MCF 10A (cell line): ENCODE measurements at regions of chr2 and their contacts with region 1.

Region 1: GRCh38 chr2:60756191-60757041 is at the start of gene PAPOLG:
- DNase-seq: peak; percentile 95
- H3K4me3 Mint-ChIP-seq: peak within 1 kb of the TSS; percentile 100
- H3K27ac Mint-ChIP-seq: peak within 1 kb of the TSS; percentile 99
- H3K4me1 Mint-ChIP-seq: peaks cover 10% of the 10 kb centered on the region
- H3K27me3 Mint-ChIP-seq: no peaks in the 10 kb centered on the region
- CTCF ChIP-seq: no peak
- total RNA-seq, gene PAPOLG: 16.9 and 18.4 TPM in 2 replicates

Region 2: DNA sequence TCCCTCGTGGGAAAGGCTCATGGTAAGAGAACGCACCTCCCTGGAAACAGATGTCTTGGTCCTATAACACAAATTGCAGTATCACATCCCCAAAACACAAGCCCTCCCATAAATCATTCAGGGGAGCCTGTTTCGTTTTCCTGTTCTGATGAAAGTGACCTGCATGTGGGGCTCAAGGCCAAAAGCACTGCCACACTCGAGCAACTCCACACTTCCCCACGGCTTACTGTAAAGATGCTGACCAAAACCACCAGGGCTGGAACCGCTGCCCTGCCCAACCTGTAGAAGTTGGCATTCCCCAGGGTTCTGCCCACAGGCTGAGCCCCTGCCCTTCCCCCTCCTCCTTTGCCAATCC is 342.6 kb before region 1 on chr2:
- CTCF ChIA-PET with region 1: no interaction called
- POLR2A ChIA-PET with region 1: no interaction called
- intact Hi-C with region 1: no loop called
- DNase-seq: no peak
- H3K4me3 Mint-ChIP-seq: no peak overlapping the region
- H3K27ac Mint-ChIP-seq: no peak overlapping the region
- H3K4me1 Mint-ChIP-seq: peaks cover 13% of the 10 kb centered on the region
- H3K27me3 Mint-ChIP-seq: peaks cover 8% of the 10 kb centered on the region
- CTCF ChIP-seq: no peak

Region 3: DNA sequence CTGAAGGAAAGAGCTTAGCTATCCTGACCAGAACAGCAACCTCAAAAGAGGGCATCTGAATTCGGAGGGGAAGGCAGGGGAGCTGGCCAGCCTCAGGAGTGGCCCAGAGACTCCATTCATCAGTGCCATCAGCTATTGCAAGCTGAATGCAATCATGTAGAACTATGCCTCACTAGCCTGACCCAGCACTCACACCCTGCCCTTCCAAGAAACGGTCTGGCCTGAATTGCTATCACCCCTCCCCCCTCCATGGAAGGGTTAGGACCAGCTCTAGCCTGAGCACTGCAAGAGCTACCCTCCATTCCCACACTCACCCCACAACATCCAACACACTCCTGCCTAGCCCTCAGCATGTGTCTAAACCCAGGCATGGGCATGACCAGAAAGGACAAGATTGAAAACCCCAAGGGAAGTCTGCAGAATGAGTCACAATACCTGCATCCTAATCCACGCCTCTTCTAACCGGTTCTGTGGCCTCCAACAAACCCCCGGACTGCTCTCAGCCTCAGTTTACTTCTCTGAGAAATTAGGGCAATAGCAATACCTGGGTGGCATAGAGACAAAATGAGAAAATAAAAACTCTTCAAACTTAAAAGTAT is 323.3 kb before region 1 on chr2:
- CTCF ChIA-PET with region 1: no interaction called
- POLR2A ChIA-PET with region 1: no interaction called
- intact Hi-C with region 1: no loop called
- DNase-seq: no peak
- H3K4me3 Mint-ChIP-seq: no peak overlapping the region
- H3K27ac Mint-ChIP-seq: no peak overlapping the region
- H3K4me1 Mint-ChIP-seq: no peaks in the 10 kb centered on the region
- H3K27me3 Mint-ChIP-seq: no peaks in the 10 kb centered on the region
- CTCF ChIP-seq: no peak

Region 4: GRCh38 chr2:60652832-60653340 is 103.5 kb before region 1 on chr2:
- CTCF ChIA-PET with region 1: no interaction called
- POLR2A ChIA-PET with region 1: no interaction called
- intact Hi-C with region 1: no loop called
- DNase-seq: no peak
- H3K4me3 Mint-ChIP-seq: no peak overlapping the region
- H3K27ac Mint-ChIP-seq: no peak overlapping the region
- H3K4me1 Mint-ChIP-seq: no peaks in the 10 kb centered on the region
- H3K27me3 Mint-ChIP-seq: peaks cover 26% of the 10 kb centered on the region
- CTCF ChIP-seq: no peak

Region 5: DNA sequence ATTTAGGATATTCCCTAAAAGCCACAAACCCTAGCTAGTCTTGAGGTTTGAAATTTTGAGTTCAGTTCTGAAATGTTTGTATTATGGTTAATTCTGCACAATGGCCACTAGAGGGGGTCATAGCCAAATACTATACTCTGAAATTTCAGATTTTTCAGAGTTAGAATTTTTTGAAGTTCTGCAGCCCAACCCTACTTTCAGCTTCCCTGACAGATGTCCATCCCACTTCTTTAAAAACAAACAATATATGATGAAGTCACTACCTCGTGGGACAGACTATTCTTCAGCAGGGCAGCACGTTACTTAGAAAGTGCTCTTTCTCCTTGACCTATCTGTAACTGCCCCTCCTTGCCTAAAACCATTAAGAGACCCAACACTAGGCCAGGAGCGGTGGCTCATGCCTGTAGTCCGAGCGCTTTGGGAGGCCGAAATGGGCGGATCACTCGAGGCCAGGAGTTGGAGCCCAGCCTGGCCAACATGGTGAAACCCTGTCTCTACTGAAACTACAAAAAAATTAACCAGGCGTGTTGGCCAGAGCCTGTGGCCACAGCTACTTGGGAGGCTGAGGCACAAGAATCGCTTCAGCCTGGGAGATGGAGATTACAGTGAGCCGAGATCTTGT is 48.6 kb before region 1 on chr2:
- CTCF ChIA-PET with region 1: interaction called, 68 read pairs
- POLR2A ChIA-PET with region 1: interaction called, 36 read pairs
- intact Hi-C with region 1: loop called (anchors 1 kb)
- DNase-seq: peak; percentile 65
- H3K4me3 Mint-ChIP-seq: no peak overlapping the region
- H3K27ac Mint-ChIP-seq: no peak overlapping the region
- H3K4me1 Mint-ChIP-seq: peaks cover 11% of the 10 kb centered on the region
- H3K27me3 Mint-ChIP-seq: no peaks in the 10 kb centered on the region
- CTCF ChIP-seq: peak; percentile 63

Region 6: DNA sequence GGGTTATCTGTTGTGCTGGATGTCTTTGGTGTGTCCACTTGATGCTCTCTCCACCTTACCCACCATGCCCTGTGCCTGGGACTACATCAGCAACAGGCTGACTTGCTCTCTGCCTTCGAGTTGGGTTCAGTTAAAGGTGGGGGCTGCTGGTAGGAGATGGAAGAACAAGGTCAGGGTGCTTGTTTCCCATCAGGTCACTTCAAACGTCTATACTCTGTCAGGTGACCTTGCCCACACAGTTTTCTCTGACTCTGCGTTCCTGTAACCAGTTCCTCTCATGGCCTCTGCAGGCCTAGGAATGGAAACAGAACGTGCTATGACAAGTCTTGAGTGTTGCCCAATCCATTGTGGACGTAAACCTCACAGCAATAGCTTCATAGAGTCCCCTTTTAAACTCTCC is 38.7 kb before region 1 on chr2:
- CTCF ChIA-PET with region 1: interaction called, 5 read pairs
- POLR2A ChIA-PET with region 1: interaction called, 10 read pairs
- intact Hi-C with region 1: no loop called
- DNase-seq: peak; percentile 90
- H3K4me3 Mint-ChIP-seq: no peak overlapping the region
- H3K27ac Mint-ChIP-seq: peak overlapping the region; percentile 89
- H3K4me1 Mint-ChIP-seq: peaks cover 15% of the 10 kb centered on the region
- H3K27me3 Mint-ChIP-seq: no peaks in the 10 kb centered on the region
- CTCF ChIP-seq: no peak

Region 7: DNA sequence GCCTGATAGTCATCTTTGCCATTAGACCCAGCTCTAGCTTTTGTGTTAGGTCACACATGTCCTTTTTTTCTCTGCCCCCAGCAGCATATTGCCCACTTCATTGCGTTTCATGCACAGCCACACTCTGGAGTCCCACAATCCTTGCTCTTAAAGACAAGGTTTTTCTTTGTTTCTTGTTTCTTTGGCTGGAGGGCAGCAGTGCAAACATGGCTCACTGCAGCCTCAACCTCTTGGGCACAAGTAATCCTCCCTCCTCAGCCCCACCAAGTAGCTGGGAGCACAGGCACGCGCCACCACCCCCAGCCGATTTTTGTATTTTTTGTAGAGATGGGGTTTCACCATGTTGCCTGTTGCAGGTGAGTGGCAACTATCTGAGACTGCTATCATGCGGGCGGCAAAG is 17.3 kb before region 1 on chr2:
- CTCF ChIA-PET with region 1: no interaction called
- POLR2A ChIA-PET with region 1: interaction called, 10 read pairs
- intact Hi-C with region 1: no loop called
- DNase-seq: no peak
- H3K4me3 Mint-ChIP-seq: no peak overlapping the region
- H3K27ac Mint-ChIP-seq: no peak overlapping the region
- H3K4me1 Mint-ChIP-seq: peaks cover 5% of the 10 kb centered on the region
- H3K27me3 Mint-ChIP-seq: no peaks in the 10 kb centered on the region
- CTCF ChIP-seq: no peak

Region 8: DNA sequence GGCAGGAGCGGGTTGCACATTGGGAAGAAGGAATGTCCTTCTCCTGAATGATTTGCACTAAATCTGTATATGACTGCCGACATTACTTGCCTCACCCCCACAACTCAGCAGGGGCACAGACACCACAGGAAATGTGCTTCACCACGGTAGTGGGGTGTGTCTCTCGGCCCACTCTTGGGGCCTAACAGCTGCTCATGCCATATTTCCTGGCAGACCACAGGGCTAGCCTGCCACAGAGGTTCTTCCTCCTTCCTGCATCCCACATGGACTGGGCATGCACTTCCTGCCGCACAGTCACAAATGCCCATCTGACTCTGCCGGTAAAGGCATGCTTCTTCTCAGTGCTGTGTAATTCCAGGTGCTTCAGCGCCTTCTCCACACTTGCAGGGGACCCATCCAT is 10.7 kb before region 1 on chr2:
- CTCF ChIA-PET with region 1: interaction called, 5 read pairs
- POLR2A ChIA-PET with region 1: interaction called, 26 read pairs
- intact Hi-C with region 1: no loop called
- DNase-seq: no peak
- H3K4me3 Mint-ChIP-seq: no peak overlapping the region
- H3K27ac Mint-ChIP-seq: no peak overlapping the region
- H3K4me1 Mint-ChIP-seq: no peaks in the 10 kb centered on the region
- H3K27me3 Mint-ChIP-seq: no peaks in the 10 kb centered on the region
- CTCF ChIP-seq: no peak

Region 9: GRCh38 chr2:60961501-60961900 is 205.1 kb after region 1 on chr2:
- CTCF ChIA-PET with region 1: interaction called, 3 read pairs
- POLR2A ChIA-PET with region 1: interaction called, 12 read pairs
- intact Hi-C with region 1: no loop called
- DNase-seq: peak; percentile 84
- H3K4me3 Mint-ChIP-seq: no peak overlapping the region
- H3K27ac Mint-ChIP-seq: peak overlapping the region; percentile 71
- H3K4me1 Mint-ChIP-seq: peaks cover 21% of the 10 kb centered on the region
- H3K27me3 Mint-ChIP-seq: no peaks in the 10 kb centered on the region
- CTCF ChIP-seq: no peak